Activated CD8-positive, alpha-beta memory T cell treated with anti-CD3 and anti-CD28 coated beads, Interleukin-2, amount 10 ng/mL, durations not matched to agents 7 days and 5 days (primary cell): ENCODE measurements at regions of chr4 and their contacts with region 1.

Region 1: GRCh38 chr4:87390891-87391575 is at the start of gene HSD17B11:
- DNase-seq: peak; percentile 92
- ATAC-seq: peak; percentile 99
- H3K4me3 Mint-ChIP-seq: peak within 1 kb of the TSS; percentile 81
- H3K27ac Mint-ChIP-seq: peak within 1 kb of the TSS; percentile 84
- H3K4me1 Mint-ChIP-seq: peaks cover 34% of the 10 kb centered on the region
- H3K27me3 Mint-ChIP-seq: no peaks in the 10 kb centered on the region
- total RNA-seq, gene HSD17B11: 30.0 to 31.9 TPM

Region 2: DNA sequence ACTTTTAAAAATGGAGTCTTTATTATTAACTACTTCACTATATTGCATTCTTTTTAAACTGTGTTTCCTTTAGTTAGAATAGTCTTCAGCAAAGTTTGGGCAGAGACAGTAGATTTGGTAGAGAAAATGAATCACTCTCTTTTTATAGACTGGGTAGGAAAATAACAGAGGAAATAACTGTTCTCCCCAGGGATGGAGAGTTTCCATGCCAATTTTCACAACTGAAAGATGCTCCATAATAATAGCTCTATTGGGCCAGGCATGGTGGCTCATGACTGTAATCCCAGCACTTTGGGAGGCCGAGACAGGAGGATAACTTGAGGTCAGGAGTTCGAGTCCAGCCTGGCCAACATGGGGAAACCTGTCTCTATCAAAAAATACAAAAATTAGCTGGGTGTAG is 81.4 kb before region 1 on chr4:
- CTCF ChIA-PET with region 1: no interaction called
- DNase-seq: no peak
- ATAC-seq: no peak
- H3K4me3 Mint-ChIP-seq: no peak overlapping the region
- H3K27ac Mint-ChIP-seq: no peak overlapping the region
- H3K4me1 Mint-ChIP-seq: peaks cover 12% of the 10 kb centered on the region
- H3K27me3 Mint-ChIP-seq: no peaks in the 10 kb centered on the region

Region 3: DNA sequence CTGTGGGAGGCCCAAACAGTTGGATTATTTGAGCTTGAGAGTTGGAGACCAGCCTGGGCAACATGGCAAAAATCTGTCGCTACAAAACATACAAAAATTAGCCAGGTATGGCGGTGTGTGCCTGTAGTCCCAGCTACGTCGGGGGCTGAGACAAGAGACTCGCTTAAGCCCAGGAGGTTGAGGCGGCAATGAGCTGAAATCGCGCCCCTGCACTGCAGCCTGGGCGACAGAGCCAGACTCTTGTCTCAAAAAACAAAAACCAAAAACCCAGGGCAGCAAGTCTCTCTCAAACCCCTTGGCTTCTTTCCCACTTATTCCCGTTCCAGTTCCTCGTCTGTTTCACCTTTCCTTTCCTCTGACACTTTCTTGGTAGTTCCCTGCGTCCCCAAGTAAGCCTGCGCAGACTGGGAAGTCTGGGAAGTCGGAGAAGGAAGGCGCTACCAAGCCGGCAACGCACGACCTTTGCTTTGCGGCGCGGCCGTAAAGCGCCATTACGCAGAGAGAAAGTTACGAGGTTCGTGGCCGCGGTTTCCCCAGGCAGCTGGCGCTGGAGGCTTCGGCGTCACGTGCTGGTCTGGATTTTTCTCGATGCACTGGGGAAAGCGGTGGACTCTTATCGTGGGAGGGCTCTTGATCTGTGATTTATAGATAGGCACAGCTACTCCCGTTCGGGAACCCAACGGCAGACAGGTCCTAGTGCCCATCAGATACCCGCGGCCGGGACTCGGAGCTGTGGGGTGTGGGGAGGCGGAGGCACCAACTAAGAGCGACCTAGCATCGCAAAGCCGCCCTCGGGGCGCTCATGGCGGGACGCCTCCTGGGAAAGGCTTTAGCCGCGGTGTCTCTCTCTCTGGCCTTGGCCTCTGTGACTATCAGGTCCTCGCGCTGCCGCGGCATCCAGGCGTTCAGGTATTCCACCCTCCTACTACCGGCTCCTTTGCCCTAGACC is 31.3 kb after region 1 on chr4 and contains the start of gene NUDT9:
- CTCF ChIA-PET with region 1: interaction called, 16 read pairs
- DNase-seq: peak; percentile 92
- ATAC-seq: peak; percentile 94
- H3K4me3 Mint-ChIP-seq: peak within 1 kb of the TSS; percentile 96
- H3K27ac Mint-ChIP-seq: peak within 1 kb of the TSS; percentile 95
- H3K4me1 Mint-ChIP-seq: peaks cover 24% of the 10 kb centered on the region
- H3K27me3 Mint-ChIP-seq: no peaks in the 10 kb centered on the region
- total RNA-seq, gene NUDT9: 8.1 to 9.6 TPM